ENCODE measurements at regions of chr10 and their contacts with region 1.

Region 1: GRCh38 chr10:70461215-70461986 is 17.2 kb upstream of the PALD1 start:
- DNase-seq: peak in 1 of 2 donors; percentile 65
- ATAC-seq: peak; percentile 78

Region 2: DNA sequence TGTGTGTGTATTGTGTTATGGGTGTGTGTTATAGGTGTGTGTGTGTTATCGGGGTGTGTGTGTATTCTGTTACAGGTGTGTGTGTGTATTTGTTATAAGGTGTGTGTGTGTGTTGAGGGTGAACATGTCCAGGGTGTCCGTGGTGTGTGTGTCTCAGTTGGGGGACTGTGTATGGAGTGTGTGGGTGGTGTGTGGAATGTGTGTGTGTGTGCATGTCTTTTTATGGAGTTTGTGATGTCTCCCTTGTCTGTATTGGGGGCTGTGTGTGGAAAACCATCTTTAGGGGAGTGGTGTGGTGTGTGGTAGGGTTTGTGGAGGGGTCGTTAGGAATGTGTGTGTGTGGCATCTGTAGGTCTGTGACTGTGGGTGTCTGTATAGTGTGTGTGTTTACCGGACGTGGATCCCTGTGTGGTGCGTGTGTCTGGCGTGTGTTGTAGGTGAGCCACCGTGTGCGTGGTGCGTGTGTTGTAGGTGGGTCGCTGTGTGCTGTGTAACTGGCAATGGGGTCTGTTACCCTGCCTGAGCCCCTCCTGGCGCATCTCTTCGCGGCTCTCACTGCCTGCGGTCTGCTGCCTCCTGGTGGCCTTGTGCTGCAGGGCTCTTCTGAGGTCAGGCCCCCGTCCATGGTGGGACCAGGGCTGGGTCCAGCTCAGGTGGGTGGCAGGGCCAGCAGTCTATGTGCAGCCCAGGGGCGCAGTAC is 78.8 kb after region 1 on chr10:
- intact Hi-C with region 1: loop called (anchors 5 kb)
- DNase-seq: peak in 1 of 2 donors; percentile 44
- ATAC-seq: peak; percentile 37

Region 3: GRCh38 chr10:70672165-70673042 is 211.0 kb after region 1 on chr10 and contains the start of gene ADAMTS14:
- intact Hi-C with region 1: no loop called
- DNase-seq: peak; percentile 35 to 39
- ATAC-seq: no peak
- total RNA-seq, gene ADAMTS14: 0.95 to 2.1 TPM